Naive thymus-derived CD4-positive, alpha-beta T cell (primary cell): ENCODE measurements at regions of chr9 and their contacts with region 1.

Region 1: DNA sequence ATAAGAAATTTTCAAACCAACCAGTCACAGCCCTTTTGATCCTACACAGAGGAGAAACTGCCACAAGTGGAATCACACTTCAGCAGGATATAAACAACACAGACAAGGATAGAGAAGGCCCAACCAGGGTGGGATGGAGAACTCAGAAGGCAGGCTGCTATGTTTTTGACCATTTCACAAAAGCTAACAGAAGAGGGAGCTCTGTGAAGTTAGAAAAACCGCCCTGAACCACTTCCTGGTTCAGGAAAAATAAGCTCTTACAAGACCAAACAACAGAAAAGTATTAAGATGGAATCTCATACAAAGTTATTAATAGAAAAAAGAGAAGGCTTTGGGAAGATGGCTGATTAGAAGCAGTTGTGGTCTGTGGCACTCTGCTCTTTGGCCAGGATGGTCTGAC is 975 bp upstream of the IFNB1 start:
- DNase-seq: peak in 3 of 9 donors; percentile 2 to 19 (median 8)
- ATAC-seq: peak; percentile 42
- H3K4me3 ChIP-seq: no peak overlapping the region
- H3K4me3 Mint-ChIP-seq: peak overlapping the region in 1 of 10 donors; percentile 26
- H3K27ac ChIP-seq: no peak overlapping the region
- H3K27ac Mint-ChIP-seq: peak overlapping the region in 4 of 9 donors; percentile 15 to 42 (median 31)
- H3K4me1 ChIP-seq: peaks cover 0 to 18% of the 10 kb centered on the region in 2 donors
- H3K4me1 Mint-ChIP-seq: peaks cover 23 to 40% (median 35%) of the 10 kb centered on the region in 7 donors
- H3K27me3 ChIP-seq: no peaks in the 10 kb centered on the region
- H3K27me3 Mint-ChIP-seq: peaks cover 0 to 20% (median 0%) of the 10 kb centered on the region in 5 donors

Region 2: GRCh38 chr9:21096172-21096900 is 17.6 kb after region 1 on chr9:
- CTCF ChIA-PET with region 1: no interaction called
- POLR2A ChIA-PET with region 1: no interaction called
- intact Hi-C with region 1: loop called in 1 of 2 experiments (anchors 1 kb)
- DNase-seq: peak in 7 of 9 donors; percentile 31 to 75 (median 68)
- ATAC-seq: peak; percentile 97
- H3K4me3 ChIP-seq: peak overlapping the region; percentile 49
- H3K4me3 Mint-ChIP-seq: peak overlapping the region; percentile 66 to 82 (median 72)
- H3K27ac ChIP-seq: peak overlapping the region; percentile 8
- H3K27ac Mint-ChIP-seq: peak overlapping the region; percentile 46 to 92 (median 83)
- H3K4me1 ChIP-seq: peaks cover 15 to 17% of the 10 kb centered on the region in 2 donors
- H3K4me1 Mint-ChIP-seq: peaks cover 25 to 44% (median 39%) of the 10 kb centered on the region in 7 donors
- H3K27me3 ChIP-seq: no peaks in the 10 kb centered on the region
- H3K27me3 Mint-ChIP-seq: no peaks in the 10 kb centered on the region